Sciatic nerve (tissue), 2 donors: ENCODE measurements at regions of chr11 and their contacts with region 1.

Region 1: GRCh38 chr11:45102810-45103621 is 43.4 kb upstream of the PRDM11 start:
- DNase-seq: no peak
- ATAC-seq: peak; percentile 68

Region 2: GRCh38 chr11:44936525-44936924 is 166.5 kb before region 1 on chr11:
- intact Hi-C with region 1: loop called (anchors 2 kb)
- DNase-seq: peak; percentile 91
- ATAC-seq: peak; percentile 82

Region 3: DNA sequence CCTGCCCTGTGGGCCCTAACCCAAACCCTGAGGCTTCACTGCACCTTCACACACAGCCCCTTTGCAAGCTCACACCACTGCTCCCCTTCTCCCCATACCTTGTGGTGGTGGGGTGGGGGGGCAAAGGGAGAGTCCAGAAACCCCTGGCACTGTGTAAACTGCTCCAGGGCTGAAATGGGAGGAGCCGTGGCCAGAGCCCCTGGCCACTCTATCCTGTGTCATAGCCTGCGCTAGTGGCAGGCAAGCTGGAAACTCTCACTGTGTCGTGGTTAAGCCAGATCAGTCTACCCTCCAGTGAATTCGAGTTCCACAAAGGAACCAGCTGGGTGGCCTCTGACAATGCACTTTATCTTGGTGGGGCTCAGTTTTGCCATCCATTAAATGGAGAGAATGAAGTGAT is 191.5 kb after region 1 on chr11:
- intact Hi-C with region 1: loop called (anchors 5 kb)
- DNase-seq: no peak
- ATAC-seq: no peak